ENCODE measurements at regions of chr20 and their contacts with region 1.

Region 1: GRCh38 chr20:51687062-51687461 is 81.1 kb downstream of the ATP9A start:
- DNase-seq: peak; percentile 80 to 85
- H3K4me3 ChIP-seq: no peak overlapping the region
- H3K27ac ChIP-seq: peak overlapping the region; percentile 91
- H3K4me1 ChIP-seq: peaks cover 15% of the 10 kb centered on the region
- H3K27me3 ChIP-seq: no peaks in the 10 kb centered on the region
- CTCF ChIP-seq: no peak

Region 2: GRCh38 chr20:51631011-51631950 is 55.8 kb before region 1 on chr20:
- CTCF ChIA-PET with region 1: no interaction called
- POLR2A ChIA-PET with region 1: no interaction called
- intact Hi-C with region 1: loop called (anchors 2 kb)
- DNase-seq: peak; percentile 62 to 96
- H3K4me3 ChIP-seq: peak overlapping the region; percentile 2; the same call in 1 of the 2 replicates
- H3K27ac ChIP-seq: peak overlapping the region; percentile 98
- H3K4me1 ChIP-seq: peaks cover 44% of the 10 kb centered on the region
- H3K27me3 ChIP-seq: no peaks in the 10 kb centered on the region
- CTCF ChIP-seq: no peak

Region 3: DNA sequence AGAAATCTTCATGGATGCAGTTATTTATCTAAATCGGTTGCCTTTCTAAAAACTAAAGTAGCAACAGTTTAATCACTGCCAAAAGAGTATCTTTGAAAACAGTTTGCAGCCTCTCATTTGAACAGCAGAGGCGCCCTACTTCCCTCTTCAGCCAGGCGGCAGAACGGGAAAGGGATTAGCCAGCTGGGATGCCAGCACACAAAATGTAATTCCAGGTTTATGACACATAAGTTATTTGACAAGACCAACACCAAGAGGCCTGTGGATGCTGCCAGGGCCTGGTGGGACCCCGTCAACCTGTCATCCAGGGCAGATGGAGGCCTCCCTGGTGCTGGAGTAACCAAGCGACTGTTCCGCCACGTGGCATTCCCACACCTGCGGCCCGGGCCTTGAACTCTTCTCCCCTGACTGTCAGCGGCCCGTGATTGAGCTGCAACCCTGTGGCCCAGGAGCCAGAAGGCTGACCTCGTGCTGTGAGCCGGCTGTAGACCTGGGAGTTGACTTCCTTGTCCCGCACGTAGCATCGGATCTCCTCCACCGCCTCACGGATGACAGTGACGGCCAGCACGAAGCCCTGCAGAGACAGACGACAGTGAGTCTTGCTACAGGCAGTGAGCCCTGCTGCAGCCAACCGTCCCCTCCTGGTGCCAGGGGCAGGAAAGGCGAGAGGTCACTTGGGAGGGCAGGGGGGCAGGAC is 25.6 kb after region 1 on chr20:
- CTCF ChIA-PET with region 1: no interaction called
- POLR2A ChIA-PET with region 1: no interaction called
- intact Hi-C with region 1: no loop called
- DNase-seq: peak in 1 of 2 experiments; percentile 51
- H3K4me3 ChIP-seq: no peak overlapping the region
- H3K27ac ChIP-seq: no peak overlapping the region
- H3K4me1 ChIP-seq: peaks cover 12% of the 10 kb centered on the region; the same call in 1 of the 2 replicates
- H3K27me3 ChIP-seq: no peaks in the 10 kb centered on the region
- CTCF ChIP-seq: peak; percentile 60

Measured in PC-9 (cell line).